Astrocyte of the cerebellum (primary cell): ENCODE measurements at regions of chr2 and their contacts with region 1.

Region 1: GRCh38 chr2:65382776-65383357 is 49.5 kb downstream of the SPRED2 start:
- DNase-seq: peak; percentile 56
- H3K4me3 ChIP-seq: no peak overlapping the region
- CTCF ChIP-seq: no peak

Region 2: DNA sequence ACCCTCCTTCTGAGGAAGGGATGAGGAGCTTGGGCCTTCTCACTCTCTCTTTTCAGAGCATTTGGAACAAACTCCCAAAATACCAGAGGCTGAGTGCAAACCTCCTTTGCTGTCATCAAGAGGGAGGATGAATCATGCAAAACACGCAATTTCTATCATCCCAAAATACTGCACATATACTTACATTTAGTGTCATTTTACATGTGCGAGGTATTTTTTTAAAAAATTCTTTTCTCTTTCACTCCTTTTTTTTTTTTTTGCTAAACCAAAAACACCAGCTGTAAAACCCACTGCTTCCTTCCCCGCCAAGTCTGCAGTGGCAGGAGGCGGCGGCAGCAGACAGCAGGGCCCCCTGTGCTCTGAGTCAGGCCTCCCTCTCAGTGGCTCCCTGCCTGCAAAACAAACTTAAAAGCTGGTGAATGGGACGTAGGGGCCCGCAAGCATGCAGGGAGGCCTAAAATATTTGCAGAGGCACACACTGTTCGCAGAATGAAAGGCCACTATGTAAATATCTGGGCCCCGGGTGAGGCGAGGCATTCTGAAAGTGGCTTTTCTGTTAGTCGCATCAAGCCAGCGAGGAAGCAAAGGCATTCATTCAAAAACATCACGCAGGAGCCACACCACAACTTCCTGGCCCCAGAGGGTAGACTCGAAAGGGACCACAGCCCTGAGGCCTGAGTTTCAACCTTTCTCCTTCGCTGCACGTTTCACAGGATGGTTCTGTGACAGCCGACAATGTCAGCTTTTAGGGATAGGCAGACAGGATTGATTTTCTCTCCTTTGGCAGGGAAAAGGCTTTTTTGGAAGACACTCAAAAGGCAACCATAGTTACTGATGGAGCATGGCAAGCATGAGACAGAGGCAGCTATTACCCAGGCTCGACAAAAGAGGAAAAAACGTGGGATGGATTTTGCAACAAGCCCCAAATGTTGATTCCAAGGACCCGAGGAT is 81.8 kb before region 1 on chr2:
- in situ Hi-C with region 1: loop called (anchors 5 kb)
- DNase-seq: peak; percentile 75
- H3K4me3 ChIP-seq: no peak overlapping the region
- CTCF ChIP-seq: no peak

Region 3: DNA sequence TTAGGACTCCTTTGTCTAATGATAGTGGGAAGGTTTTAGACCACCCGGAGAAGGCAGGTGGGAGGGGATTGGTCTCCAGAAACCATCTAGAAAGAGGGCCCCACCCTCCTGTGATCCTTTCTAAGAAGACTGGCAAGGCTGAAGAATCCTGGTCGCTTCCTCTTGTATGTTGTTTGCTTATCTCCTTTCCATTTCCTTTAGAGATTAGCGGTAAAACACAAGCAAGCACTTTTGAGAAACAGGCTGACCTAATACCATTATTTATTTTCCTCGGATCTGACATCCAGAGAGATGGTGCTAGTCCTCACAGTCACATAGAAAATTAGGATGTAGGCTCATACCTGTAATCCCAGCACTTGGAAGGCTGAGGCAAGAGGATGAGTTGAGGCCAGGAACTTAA is 94.7 kb after region 1 on chr2:
- in situ Hi-C with region 1: no loop called
- DNase-seq: no peak
- H3K4me3 ChIP-seq: no peak overlapping the region
- CTCF ChIP-seq: no peak

Region 4: GRCh38 chr2:65501074-65501473 is 118.2 kb after region 1 on chr2:
- in situ Hi-C with region 1: no loop called
- DNase-seq: no peak
- H3K4me3 ChIP-seq: no peak overlapping the region
- CTCF ChIP-seq: no peak